ENCODE measurements at regions of chr4 and their contacts with region 1.

Region 1: DNA sequence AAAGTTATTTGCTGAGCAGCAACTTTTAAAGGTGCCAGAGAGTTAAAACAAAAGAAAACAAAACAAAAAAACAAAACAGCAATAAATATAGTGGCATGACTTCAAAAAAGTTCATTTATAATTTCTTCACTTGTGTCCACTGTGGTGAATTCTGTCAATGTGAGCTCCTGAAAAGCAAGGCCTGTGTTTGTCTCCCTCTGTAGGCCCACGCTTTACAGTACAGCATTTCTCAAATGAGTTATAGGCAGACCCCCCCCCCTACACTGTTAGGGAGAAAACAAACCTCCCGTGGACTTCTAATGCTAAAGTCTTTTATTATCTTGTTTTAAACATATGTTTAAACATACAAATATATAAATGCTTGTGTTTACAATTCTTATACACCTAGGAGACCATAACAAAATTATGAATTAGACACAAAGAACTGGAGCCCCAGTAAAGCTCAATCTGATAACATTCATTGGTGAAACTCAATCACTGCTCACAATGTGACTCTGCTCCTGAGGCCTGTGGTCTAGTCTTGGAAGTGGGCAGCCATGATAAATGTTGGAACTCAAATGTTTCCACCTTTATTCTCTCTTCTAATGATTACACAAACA is 47.0 kb upstream of the SCOC start:
- DNase-seq: no peak
- ATAC-seq: peak; percentile 80

Region 2: GRCh38 chr4:139794158-139794954 is 532.1 kb before region 1 on chr4:
- intact Hi-C with region 1: no loop called
- DNase-seq: no peak
- ATAC-seq: no peak

Region 3: DNA sequence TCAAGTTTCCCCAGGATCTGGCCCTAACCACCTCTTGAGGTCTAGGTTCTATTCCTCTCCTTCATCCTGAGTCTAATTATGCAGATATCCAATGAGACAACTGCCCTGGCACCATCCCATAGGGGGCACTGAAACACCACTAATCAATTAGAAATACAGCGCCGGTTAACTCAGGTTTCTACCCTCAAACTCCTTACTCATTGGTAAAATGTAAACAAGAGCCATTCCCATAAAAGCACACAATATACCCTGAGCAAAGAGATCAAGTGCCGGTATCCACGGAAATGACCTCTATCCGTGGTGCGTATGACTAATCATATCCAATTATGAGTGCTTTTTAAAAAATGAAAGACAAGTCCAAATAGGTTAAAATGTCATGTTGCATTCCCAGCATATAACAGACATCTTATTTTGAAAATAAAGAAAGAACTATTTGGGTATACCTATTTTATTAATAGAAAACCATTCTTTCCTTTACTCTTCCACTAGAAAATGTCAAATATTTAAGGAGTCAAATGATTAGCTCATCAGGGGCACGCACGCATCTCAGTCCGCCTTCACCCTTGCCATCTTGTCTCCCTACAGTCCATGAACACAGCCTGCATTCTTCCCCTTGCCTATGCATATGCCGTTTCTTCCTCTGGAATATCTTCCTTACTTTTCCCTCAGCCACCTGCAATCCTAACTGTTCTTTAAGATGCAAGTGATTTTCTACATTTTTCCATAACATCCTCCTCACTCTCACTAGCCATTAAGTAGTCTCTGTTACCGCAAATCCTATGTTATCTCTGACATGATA is 313.6 kb before region 1 on chr4:
- intact Hi-C with region 1: loop called in 1 of 2 experiments (anchors 10 kb)
- DNase-seq: peak; percentile 62 to 78
- ATAC-seq: peak; percentile 98

Region 4: GRCh38 chr4:140533951-140534480 is 207.5 kb after region 1 on chr4:
- intact Hi-C with region 1: no loop called
- DNase-seq: no peak
- ATAC-seq: no peak

Region 5: GRCh38 chr4:141046255-141046654 is 719.8 kb after region 1 on chr4:
- intact Hi-C with region 1: no loop called
- DNase-seq: no peak
- ATAC-seq: no peak